ENCODE measurements at regions of chr10 and their contacts with region 1.

Region 1: GRCh38 chr10:43420369-43421200 is 11.6 kb upstream of the HNRNPF start:
- DNase-seq: peak; percentile 90
- ATAC-seq: peak; percentile 80
- H3K4me3 Mint-ChIP-seq: peak overlapping the region; percentile 77
- H3K27ac Mint-ChIP-seq: peak overlapping the region; percentile 96
- H3K4me1 Mint-ChIP-seq: peaks cover 31% of the 10 kb centered on the region
- H3K27me3 Mint-ChIP-seq: no peaks in the 10 kb centered on the region
- CTCF ChIP-seq: no peak

Region 2: DNA sequence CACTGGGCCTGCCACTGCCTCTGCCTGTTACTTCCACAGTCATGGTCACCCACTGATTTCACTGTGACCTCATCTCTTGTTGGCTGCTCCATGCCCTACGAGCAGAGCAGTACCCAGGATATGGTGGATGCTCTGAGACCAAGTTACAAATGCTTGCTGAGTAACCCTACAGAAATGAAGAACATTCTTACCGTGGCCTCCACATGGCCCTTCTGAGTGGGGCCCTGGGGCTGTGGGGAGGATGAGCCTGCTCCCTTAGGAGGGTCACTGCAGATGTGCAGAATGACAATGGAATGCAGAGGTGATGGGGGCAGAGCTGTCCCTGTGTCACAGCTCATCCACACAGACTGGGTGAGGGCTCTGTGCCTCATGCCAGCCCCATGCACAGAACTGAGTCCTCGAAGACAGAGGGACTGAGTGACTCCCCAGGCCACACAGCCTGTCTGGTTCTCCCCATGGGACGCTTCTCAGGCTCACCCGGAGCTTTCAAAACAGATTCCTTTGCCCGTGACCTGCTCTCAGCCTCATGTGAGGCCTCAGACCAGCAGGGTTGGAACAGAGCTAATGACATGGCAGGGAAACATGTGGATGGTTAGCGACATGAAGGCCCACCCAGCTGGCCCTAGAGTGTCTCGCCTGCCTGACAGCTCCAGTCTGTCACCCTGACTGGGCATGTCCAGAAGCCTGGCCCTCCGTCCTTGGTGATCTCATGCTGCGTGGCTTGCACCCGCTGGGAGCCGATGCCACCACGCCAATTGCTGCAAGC is 371.8 kb before region 1 on chr10:
- CTCF ChIA-PET with region 1: no interaction called
- POLR2A ChIA-PET with region 1: no interaction called
- intact Hi-C with region 1: no loop called
- DNase-seq: no peak
- ATAC-seq: no peak
- H3K4me3 Mint-ChIP-seq: no peak overlapping the region
- H3K27ac Mint-ChIP-seq: no peak overlapping the region
- H3K4me1 Mint-ChIP-seq: no peaks in the 10 kb centered on the region
- H3K27me3 Mint-ChIP-seq: peaks cover 1% of the 10 kb centered on the region
- CTCF ChIP-seq: no peak

Region 3: GRCh38 chr10:43407576-43408330 is 12.8 kb before region 1 on chr10:
- CTCF ChIA-PET with region 1: interaction called, 5 read pairs
- POLR2A ChIA-PET with region 1: interaction called, 111 read pairs
- intact Hi-C with region 1: loop called (anchors 2 kb)
- DNase-seq: peak; percentile 97
- ATAC-seq: peak; percentile 35
- H3K4me3 Mint-ChIP-seq: peak overlapping the region; percentile 99
- H3K27ac Mint-ChIP-seq: peak overlapping the region; percentile 100
- H3K4me1 Mint-ChIP-seq: peaks cover 24% of the 10 kb centered on the region
- H3K27me3 Mint-ChIP-seq: no peaks in the 10 kb centered on the region
- CTCF ChIP-seq: peak; percentile 56

Region 4: DNA sequence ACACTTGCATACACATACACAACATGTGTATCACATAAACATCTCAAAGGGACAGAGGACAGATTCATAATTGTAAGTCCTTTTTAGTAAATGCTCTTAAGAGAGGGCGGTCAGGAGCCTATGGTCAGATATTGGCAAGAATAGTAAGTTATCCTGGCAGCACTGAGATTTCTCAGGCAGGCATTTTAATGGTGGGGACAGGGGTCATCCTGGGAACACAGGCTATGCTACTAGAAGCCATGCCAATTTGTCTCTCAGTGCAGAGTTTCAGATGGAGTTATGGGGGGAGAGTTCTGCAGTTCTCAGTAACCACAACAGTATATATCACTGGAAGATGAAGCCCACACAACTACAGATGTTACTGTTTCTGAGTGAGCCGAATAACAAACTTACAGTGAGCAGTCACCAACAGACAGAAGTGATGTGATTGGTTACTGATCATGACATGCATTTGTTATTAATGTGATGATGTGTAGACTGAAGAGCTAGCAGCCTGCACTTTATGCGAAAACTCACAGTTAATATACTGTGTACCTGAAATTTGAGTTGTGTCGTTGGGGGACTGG is 32.8 kb after region 1 on chr10:
- CTCF ChIA-PET with region 1: no interaction called
- POLR2A ChIA-PET with region 1: interaction called, 10 read pairs
- intact Hi-C with region 1: loop called (anchors 1 kb)
- DNase-seq: peak; percentile 33
- ATAC-seq: peak; percentile 41
- H3K4me3 Mint-ChIP-seq: peak overlapping the region; percentile 72
- H3K27ac Mint-ChIP-seq: peak overlapping the region; percentile 94
- H3K4me1 Mint-ChIP-seq: peaks cover 42% of the 10 kb centered on the region
- H3K27me3 Mint-ChIP-seq: no peaks in the 10 kb centered on the region
- CTCF ChIP-seq: no peak

Region 5: DNA sequence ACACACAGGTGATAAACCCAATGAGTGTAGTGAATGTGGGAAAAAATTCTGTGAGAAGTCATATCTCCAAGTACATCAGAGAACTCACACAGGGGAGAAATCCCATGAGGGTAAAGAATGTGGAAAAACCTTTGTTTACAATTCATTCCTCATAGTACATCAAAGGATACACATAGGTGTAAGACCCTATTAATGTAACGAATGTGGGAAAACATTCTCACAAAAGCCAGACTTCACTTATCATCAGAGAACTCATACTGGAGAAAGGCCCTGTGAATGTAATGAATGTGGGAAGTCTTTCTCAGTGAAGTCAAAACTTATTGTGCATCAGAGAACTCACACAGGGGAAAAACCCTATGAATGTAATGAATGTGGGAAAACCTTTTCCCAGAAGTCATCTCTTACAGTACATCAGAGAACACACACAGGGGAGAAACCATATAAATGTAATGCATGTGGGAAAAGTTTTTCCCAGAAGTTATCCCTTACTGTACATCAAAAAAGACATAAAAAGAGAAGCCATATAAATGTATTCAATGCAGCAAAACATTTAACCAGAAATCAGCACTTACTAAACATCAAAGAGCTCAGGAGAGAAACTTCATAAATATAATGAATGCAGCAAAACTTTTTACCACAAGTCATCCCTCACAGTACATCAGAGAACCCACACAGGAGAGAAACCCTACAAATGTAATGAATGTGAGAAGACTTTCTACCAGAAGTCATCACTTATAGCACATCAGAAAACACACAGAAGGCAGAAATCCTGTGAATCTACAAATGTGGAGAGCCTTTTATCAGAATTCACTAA is 104.1 kb after region 1 on chr10:
- CTCF ChIA-PET with region 1: no interaction called
- POLR2A ChIA-PET with region 1: no interaction called
- intact Hi-C with region 1: no loop called
- DNase-seq: no peak
- ATAC-seq: no peak
- H3K4me3 Mint-ChIP-seq: no peak overlapping the region
- H3K27ac Mint-ChIP-seq: no peak overlapping the region
- H3K4me1 Mint-ChIP-seq: no peaks in the 10 kb centered on the region
- H3K27me3 Mint-ChIP-seq: no peaks in the 10 kb centered on the region
- CTCF ChIP-seq: no peak

Measured in activated CD8-positive, alpha-beta T cell treated with anti-CD3 and anti-CD28 coated beads for 36 hours (primary cell).